RWPE1 (cell line): ENCODE measurements at regions of chr20 and their contacts with region 1.

Region 1: DNA sequence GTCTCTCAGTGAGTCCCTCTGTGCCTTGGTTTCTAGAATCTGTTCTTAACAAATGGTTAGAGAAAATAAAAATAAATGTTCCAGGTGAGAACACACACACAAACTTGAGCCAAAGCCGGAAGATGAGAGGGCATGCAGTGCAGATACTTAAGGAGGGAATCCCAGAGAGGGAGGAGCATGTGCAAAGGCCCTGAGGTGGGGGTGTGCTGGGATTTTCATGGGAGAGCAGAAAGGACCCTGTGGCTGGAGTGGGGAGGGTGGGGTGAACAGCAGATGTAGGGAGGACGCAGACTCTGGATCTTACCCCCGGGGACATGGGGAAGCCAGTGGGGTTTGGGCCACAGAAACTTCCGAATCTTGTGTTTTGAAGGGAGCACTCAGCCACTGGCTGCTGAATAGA is 17.5 kb downstream of the TFAP2C start:
- DNase-seq: no peak
- H3K27ac ChIP-seq: no peak overlapping the region
- CTCF ChIP-seq: no peak

Region 2: DNA sequence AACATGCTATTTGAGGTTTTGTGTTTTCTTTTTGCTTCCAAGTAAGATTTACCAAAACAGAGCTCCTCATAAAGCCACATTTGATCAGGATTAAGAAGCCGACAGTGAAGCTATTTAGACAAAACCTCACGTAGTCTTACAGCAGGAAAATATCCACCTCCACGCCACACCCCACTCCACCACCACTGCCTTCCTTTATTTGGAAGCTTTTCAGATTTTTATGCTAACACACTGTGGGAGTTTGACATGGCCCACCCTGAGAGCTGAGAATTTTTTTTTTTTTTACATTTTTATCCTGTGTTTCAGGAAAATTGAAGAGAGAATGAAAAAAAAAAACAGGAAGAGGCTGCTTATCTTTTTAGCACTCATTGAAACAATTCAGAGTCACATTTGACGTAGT is 502.8 kb before region 1 on chr20:
- CTCF ChIA-PET with region 1: no interaction called
- POLR2A ChIA-PET with region 1: no interaction called
- DNase-seq: no peak
- H3K27ac ChIP-seq: no peak overlapping the region
- CTCF ChIP-seq: no peak

Region 3: GRCh38 chr20:56595746-56596478 is 50.7 kb before region 1 on chr20:
- CTCF ChIA-PET with region 1: interaction called, 10 read pairs
- POLR2A ChIA-PET with region 1: no interaction called
- DNase-seq: no peak
- H3K27ac ChIP-seq: no peak overlapping the region
- CTCF ChIP-seq: no peak